HCT116 (cell line): ENCODE measurements at regions of chr5 and their contacts with region 1.

Region 1: GRCh38 chr5:131453826-131454225 is 181.2 kb downstream of the RAPGEF6 start:
- DNase-seq: no peak
- ATAC-seq: no peak
- H3K4me3 ChIP-seq: no peak overlapping the region
- H3K27ac ChIP-seq: no peak overlapping the region
- H3K4me1 ChIP-seq: no peaks in the 10 kb centered on the region
- H3K27me3 ChIP-seq: no peaks in the 10 kb centered on the region
- CTCF ChIP-seq: no peak
- POLR2A ChIP-seq: no peak
- RAD21 ChIP-seq: no peak

Region 2: GRCh38 chr5:131709043-131709442 is 255.2 kb after region 1 on chr5:
- CTCF ChIA-PET with region 1: no interaction called
- POLR2A ChIA-PET with region 1: no interaction called
- RAD21 ChIA-PET with region 1: no interaction called
- intact Hi-C with region 1: no loop called
- DNase-seq: no peak
- ATAC-seq: no peak
- H3K4me3 ChIP-seq: no peak overlapping the region
- H3K27ac ChIP-seq: no peak overlapping the region
- H3K4me1 ChIP-seq: no peaks in the 10 kb centered on the region
- H3K27me3 ChIP-seq: no peaks in the 10 kb centered on the region
- CTCF ChIP-seq: no peak
- POLR2A ChIP-seq: no peak
- RAD21 ChIP-seq: no peak

Region 3: DNA sequence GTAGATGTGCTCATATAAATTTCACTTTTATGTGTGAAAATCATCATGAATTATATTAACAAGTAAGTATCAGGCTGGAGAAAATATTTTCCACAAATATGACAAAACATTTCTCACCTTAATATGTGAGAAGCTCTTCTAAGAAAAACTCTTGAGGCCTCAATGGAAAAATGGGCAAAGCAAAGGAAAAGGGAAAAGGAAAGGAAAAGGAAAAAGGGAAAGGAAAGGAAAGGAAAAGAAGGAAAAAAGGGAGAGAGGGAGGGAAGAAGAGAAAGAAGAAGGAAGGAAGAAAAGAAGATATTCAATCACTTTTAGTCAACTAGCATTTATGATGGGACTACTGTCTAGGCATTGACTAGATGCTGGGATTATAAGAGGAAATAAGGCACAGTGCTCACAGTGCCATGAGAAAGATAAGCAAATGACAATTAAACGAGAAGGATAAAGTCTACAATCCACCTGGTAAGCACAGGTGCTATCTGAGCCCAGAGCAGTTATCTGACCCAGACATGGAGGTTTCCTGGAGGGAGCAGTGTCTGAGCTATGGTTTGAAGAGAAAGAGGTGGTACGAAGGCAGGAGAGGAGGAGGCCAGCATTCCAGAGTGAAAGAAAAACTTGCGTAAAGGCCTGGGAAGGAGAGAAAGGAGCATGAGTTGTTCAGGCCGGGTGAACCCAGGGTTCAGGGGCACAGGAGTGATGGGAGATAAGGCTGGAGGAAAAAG is 575.9 kb after region 1 on chr5:
- CTCF ChIA-PET with region 1: no interaction called
- POLR2A ChIA-PET with region 1: no interaction called
- RAD21 ChIA-PET with region 1: no interaction called
- intact Hi-C with region 1: loop called (anchors 10 kb)
- DNase-seq: no peak
- ATAC-seq: no peak
- H3K4me3 ChIP-seq: no peak overlapping the region
- H3K27ac ChIP-seq: no peak overlapping the region
- H3K4me1 ChIP-seq: no peaks in the 10 kb centered on the region
- H3K27me3 ChIP-seq: no peaks in the 10 kb centered on the region
- CTCF ChIP-seq: no peak
- POLR2A ChIP-seq: no peak
- RAD21 ChIP-seq: no peak